Adrenal gland (tissue), 19 donors: ENCODE measurements at regions of chr9 and their contacts with region 1.

Region 1: DNA sequence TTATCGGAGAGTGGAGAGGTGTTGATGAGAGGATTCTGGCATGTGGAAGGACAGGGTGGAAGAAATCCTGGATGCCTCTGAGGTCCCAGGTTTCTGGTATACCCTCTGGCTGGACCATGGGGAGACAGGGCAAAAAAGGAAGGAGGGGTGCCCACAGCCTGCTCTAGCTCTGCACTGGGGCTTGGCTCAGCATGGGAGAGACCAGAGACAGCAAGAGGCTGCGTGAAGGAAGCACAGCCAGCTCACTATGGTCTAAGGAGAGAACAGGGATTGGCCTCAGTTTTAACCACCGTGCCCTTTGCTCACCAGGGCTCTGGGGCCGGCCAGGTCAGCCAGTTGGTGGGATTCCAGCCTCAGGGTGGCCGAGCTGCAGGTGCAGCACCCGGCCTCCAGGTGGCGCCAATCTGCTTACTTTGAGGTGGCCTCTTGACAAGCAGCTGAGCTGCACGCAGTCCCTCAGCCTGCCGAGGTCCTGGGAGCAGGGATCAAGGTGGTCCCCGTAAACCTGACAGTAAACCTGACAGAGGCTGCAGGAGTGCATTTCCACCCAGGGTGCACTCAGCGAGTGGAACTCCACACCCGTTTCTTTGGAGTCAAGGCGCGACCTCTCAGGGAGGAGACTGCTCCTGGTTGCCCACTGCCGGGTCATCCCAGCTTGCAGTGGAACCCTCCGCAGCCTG is 25.0 kb upstream of the SPTLC1 start:
- DNase-seq: peak; percentile 76 to 96 (median 87)
- H3K4me3 ChIP-seq: peak overlapping the region in 1 of 4 donors; percentile 71
- H3K27ac ChIP-seq: peak overlapping the region in 1 of 5 donors; percentile 15
- H3K4me1 ChIP-seq: peaks cover 13 to 15% of the 10 kb centered on the region in 2 donors
- H3K27me3 ChIP-seq: no peaks in the 10 kb centered on the region
- CTCF ChIP-seq: peak; percentile 81 to 98 (median 92)
- POLR2A ChIP-seq: no peak

Region 2: GRCh38 chr9:91933556-91934352 is 206.5 kb before region 1 on chr9:
- intact Hi-C with region 1: no loop called
- DNase-seq: no peak
- H3K4me3 ChIP-seq: no peak overlapping the region
- H3K27ac ChIP-seq: no peak overlapping the region
- H3K4me1 ChIP-seq: peaks cover 0 to 8% of the 10 kb centered on the region in 2 donors
- H3K27me3 ChIP-seq: no peaks in the 10 kb centered on the region
- CTCF ChIP-seq: no peak
- POLR2A ChIP-seq: no peak

Region 3: DNA sequence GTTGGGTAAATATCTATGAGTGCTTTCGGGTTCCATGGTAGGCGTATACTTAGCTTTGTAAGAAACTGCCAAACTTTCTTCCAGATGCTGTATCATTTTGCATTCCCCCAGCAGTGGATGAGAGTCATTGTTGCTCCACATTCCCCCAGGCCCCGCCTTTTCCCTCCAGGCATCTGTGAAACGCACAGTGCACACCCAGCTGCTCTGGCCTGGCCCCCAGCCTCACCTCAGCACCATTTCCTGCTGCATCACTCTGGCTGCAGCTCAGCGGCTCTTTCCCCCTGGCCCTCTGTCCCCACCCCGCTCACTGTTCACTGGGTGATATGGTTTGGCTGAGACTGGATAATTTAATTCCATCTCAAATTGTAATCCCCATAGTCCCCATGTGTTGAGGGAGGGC is 51.6 kb after region 1 on chr9:
- intact Hi-C with region 1: no loop called
- DNase-seq: no peak
- H3K4me3 ChIP-seq: no peak overlapping the region
- H3K27ac ChIP-seq: no peak overlapping the region
- H3K4me1 ChIP-seq: no peaks in the 10 kb centered on the region
- H3K27me3 ChIP-seq: no peaks in the 10 kb centered on the region
- CTCF ChIP-seq: no peak
- POLR2A ChIP-seq: no peak

Region 4: DNA sequence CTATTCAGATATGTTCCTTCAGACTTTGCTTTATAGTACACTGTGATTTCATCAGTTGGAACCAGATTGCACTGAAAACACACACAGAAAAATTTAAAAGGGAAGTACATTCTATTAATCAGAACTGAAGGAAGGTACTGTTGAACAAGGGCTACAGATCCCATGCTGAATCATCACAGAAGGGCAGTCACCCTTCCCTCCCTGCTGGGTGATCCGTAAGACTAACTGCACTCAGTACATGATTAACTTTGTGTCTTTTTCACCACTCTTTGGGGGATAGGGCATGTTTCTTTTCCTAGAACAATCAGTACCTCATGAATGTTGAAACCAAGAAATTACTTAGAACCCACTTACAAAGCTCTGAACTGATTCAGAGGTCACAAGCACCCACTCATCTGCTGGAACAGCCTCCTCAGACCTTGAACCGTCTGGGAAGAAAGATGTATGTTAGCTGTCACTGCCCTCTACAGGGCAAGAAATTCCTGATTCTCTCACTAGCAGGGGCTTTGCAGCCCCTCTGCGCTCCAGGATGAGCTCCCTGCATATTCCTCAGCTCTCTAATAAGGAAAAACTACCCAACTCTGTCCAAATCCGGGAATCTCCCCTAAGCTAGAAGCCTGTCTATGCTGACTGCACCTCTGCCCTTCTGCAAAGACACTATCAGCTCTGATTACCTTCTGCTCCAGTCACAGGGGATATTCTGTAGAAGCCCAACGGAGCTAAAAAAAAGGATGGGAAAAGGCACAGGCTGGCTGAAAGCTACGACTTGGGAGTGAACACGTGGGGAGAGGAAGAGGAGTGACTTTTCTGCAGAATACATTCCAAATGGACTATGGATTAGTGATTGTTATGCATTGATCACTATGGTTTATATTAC is 102.3 kb after region 1 on chr9:
- intact Hi-C with region 1: loop called (anchors 2 to 5 kb)
- DNase-seq: peak; percentile 42 to 69 (median 59)
- H3K4me3 ChIP-seq: no peak overlapping the region
- H3K27ac ChIP-seq: peak overlapping the region in 4 of 5 donors; percentile 26 to 72 (median 60)
- H3K4me1 ChIP-seq: peaks cover 6% of the 10 kb centered on the region in 2 donors
- H3K27me3 ChIP-seq: no peaks in the 10 kb centered on the region
- CTCF ChIP-seq: peak; percentile 38 to 82 (median 59)
- POLR2A ChIP-seq: no peak

Region 5: GRCh38 chr9:92293452-92294296 is 153.5 kb after region 1 on chr9 and contains the start of gene IARS1:
- intact Hi-C with region 1: no loop called
- DNase-seq: peak; percentile 97 to 100 (median 99)
- H3K4me3 ChIP-seq: peak within 1 kb of the TSS; percentile 54 to 74 (median 63)
- H3K27ac ChIP-seq: peak within 1 kb of the TSS in 4 of 5 donors; percentile 69 to 83 (median 76)
- H3K4me1 ChIP-seq: peaks cover 12 to 30% of the 10 kb centered on the region in 2 donors
- H3K27me3 ChIP-seq: no peaks in the 10 kb centered on the region
- CTCF ChIP-seq: peak in 1 of 6 experiments; percentile 23
- POLR2A ChIP-seq: peak in 1 of 2 donors; percentile 87
- total RNA-seq, gene IARS1: 55.5 to 157 (median 85.4) TPM

Region 6: DNA sequence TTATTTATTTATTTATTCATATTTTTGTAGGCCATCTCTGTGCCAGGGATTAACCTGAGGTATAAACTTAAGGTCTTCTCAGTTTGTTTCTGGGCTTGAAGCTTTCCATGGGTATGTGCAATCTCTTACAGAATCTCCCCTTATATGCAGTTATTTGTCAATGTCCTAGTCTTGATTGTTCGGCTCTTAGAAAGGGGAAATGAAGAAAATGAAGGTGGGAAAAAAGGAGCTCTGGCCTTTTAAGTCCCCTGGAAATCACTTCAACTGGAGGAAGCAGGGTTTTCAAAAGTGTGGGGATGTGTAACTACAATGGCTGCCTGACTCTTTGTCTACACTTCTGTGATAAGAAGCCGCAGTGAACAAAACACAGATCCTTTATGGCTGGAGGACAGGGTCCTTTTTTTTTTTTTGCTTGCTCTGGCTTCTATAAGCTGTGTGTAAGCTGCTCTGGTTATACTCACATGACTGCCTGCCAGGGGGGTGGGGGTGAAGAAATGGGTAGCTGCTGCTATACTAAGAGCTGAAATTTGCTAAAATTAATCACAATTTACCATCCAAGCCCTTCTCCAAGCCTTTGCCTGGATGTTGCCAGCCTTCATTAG is 219.3 kb after region 1 on chr9:
- intact Hi-C with region 1: no loop called
- DNase-seq: no peak
- H3K4me3 ChIP-seq: no peak overlapping the region
- H3K27ac ChIP-seq: no peak overlapping the region
- H3K4me1 ChIP-seq: no peaks in the 10 kb centered on the region
- H3K27me3 ChIP-seq: no peaks in the 10 kb centered on the region
- CTCF ChIP-seq: no peak
- POLR2A ChIP-seq: no peak